Activated CD8-positive, alpha-beta T cell treated with anti-CD3 and anti-CD28 coated beads for 36 hours (primary cell): ENCODE measurements at regions of chr17 and their contacts with region 1.

Region 1: DNA sequence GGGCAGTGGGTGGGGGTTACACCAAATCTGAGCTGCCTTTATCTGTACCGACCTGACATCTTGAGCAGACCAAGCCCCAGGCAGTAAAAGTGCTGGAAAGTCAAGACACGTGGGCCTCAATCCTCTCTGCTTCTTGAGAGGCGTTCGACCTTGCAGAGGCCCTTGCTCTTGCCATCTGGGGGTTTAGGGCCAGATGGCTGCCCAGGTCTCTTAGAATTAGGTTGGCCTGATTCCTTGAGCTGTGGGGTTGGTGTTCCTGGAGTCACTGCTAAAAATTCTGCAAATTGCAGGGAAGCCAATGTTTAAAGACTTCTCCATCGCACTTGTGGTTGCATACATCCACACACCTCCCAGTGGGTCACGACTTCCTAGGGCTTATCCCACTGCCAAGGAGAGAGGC is 238.2 kb upstream of the ASIC2 start:
- DNase-seq: no peak
- ATAC-seq: no peak
- H3K4me3 Mint-ChIP-seq: no peak overlapping the region
- H3K27ac Mint-ChIP-seq: no peak overlapping the region
- H3K4me1 Mint-ChIP-seq: no peaks in the 10 kb centered on the region
- H3K27me3 Mint-ChIP-seq: no peaks in the 10 kb centered on the region
- CTCF ChIP-seq: no peak

Region 2: DNA sequence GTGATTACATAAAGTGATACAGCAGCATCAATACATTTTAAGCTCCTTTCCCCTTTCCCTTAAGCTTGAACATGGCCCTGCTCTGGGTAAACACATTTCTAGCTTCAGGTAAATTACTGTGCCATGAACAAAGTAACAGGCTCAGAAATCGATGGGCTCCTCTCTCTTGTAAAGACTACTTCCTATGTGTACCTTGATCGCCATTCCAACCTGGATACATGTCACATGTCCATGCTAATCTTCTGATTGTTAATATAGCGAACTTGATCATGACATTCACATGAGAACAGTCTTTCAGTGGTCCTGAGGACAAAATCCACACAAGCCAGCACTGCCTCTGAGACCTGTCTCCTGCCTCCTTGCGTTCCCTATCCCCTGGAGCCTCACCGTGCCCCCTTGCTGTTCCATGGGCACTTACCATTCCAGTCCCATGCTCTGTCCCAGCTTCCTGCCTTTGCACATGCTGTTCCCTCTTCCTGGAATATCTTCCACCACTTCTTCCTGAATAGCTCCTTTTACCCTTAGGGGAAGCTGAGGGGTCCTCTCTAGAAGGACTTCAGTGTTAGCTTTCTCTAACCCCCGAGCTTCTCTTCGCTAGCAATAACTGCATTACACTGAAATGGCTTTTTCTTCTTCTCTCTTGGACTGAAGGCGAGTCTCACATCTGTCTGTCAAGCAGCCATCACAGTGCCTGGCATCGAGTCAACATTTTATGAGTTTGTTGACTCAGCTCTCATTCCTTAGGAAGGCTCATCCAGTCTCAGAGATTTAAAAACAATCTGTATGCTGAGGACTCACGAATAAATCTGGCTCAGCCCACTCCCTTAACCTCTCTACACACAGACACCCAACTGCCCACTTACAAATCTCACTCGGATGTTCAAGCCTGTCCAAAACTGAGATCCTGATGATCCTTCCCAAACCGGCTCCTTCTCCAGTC is 331.5 kb before region 1 on chr17:
- CTCF ChIA-PET with region 1: no interaction called
- POLR2A ChIA-PET with region 1: no interaction called
- intact Hi-C with region 1: loop called (anchors 10 kb)
- DNase-seq: no peak
- ATAC-seq: no peak
- H3K4me3 Mint-ChIP-seq: no peak overlapping the region
- H3K27ac Mint-ChIP-seq: no peak overlapping the region
- H3K4me1 Mint-ChIP-seq: no peaks in the 10 kb centered on the region
- H3K27me3 Mint-ChIP-seq: peaks cover 4% of the 10 kb centered on the region
- CTCF ChIP-seq: no peak

Region 3: GRCh38 chr17:33583518-33584417 is 52.5 kb after region 1 on chr17:
- CTCF ChIA-PET with region 1: no interaction called
- POLR2A ChIA-PET with region 1: no interaction called
- intact Hi-C with region 1: no loop called
- DNase-seq: no peak
- ATAC-seq: no peak
- H3K4me3 Mint-ChIP-seq: no peak overlapping the region
- H3K27ac Mint-ChIP-seq: no peak overlapping the region
- H3K4me1 Mint-ChIP-seq: no peaks in the 10 kb centered on the region
- H3K27me3 Mint-ChIP-seq: peaks cover 5% of the 10 kb centered on the region
- CTCF ChIP-seq: no peak